MCF 10A (cell line): ENCODE measurements at regions of chr10 and their contacts with region 1.

Region 1: DNA sequence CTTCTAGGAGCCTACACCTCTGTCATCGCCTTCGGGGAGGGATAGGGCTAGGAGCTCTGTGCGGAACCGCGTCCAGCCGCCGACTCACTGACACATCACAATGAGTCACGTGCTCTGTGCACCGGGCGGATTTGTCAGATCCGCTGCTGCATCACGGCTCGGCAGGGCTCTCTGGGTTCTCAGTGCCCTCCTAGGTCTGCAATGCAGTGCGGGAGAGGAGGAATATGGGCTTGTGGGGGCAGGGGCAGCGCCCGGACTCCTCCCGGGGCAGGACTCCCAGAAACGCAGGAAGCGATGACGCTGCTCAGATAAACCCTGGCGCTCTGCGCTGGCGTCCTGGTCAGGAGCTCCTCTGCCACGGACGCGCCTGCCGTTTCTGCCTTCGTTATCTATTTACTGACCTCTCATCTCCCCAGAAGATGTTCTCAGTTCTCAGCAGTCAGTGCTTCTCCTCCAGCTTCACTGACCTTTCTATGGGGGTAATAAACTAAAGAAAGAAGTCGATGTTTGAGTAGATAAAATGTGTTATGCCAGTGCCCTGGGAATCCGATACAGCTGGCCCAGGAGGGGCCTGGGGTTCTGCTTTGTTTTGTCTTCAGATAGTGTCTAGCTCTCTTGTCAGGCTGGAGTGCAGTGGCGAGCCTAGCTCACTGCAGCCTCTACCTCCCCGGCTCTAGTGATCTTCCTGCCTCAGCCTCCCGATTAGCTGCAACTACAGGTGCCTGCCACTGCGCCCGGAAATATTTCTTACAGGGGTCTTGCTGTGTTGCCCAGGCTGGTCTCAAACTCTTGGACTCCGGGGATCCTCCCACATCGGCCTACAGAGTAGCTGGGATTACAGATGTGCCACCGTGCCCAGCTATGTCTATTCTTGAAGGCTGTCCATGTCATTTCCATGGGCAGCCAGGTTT is 22.8 kb upstream of the ITGB1 start:
- DNase-seq: peak; percentile 99
- H3K4me3 Mint-ChIP-seq: peak overlapping the region; percentile 92
- H3K27ac Mint-ChIP-seq: peak overlapping the region; percentile 99
- H3K4me1 Mint-ChIP-seq: peaks cover 34% of the 10 kb centered on the region
- H3K27me3 Mint-ChIP-seq: no peaks in the 10 kb centered on the region
- CTCF ChIP-seq: no peak

Region 2: GRCh38 chr10:32893431-32893830 is 87.4 kb before region 1 on chr10:
- CTCF ChIA-PET with region 1: no interaction called
- POLR2A ChIA-PET with region 1: no interaction called
- intact Hi-C with region 1: no loop called
- DNase-seq: peak; percentile 14
- H3K4me3 Mint-ChIP-seq: no peak overlapping the region
- H3K27ac Mint-ChIP-seq: no peak overlapping the region
- H3K4me1 Mint-ChIP-seq: peaks cover 5% of the 10 kb centered on the region
- H3K27me3 Mint-ChIP-seq: no peaks in the 10 kb centered on the region
- CTCF ChIP-seq: no peak

Region 3: GRCh38 chr10:32929632-32930031 is 51.2 kb before region 1 on chr10:
- CTCF ChIA-PET with region 1: no interaction called
- POLR2A ChIA-PET with region 1: interaction called, 89 read pairs
- intact Hi-C with region 1: no loop called
- DNase-seq: no peak
- H3K4me3 Mint-ChIP-seq: no peak overlapping the region
- H3K27ac Mint-ChIP-seq: peak overlapping the region; percentile 49
- H3K4me1 Mint-ChIP-seq: peaks cover 19% of the 10 kb centered on the region
- H3K27me3 Mint-ChIP-seq: no peaks in the 10 kb centered on the region
- CTCF ChIP-seq: no peak

Region 4: GRCh38 chr10:32938554-32939061 is 42.2 kb before region 1 on chr10:
- CTCF ChIA-PET with region 1: interaction called, 4 read pairs
- POLR2A ChIA-PET with region 1: interaction called, 89 read pairs
- intact Hi-C with region 1: no loop called
- DNase-seq: no peak
- H3K4me3 Mint-ChIP-seq: peak overlapping the region; percentile 63
- H3K27ac Mint-ChIP-seq: peak overlapping the region; percentile 97
- H3K4me1 Mint-ChIP-seq: peaks cover 59% of the 10 kb centered on the region
- H3K27me3 Mint-ChIP-seq: no peaks in the 10 kb centered on the region
- CTCF ChIP-seq: no peak

Region 5: GRCh38 chr10:32948451-32948850 is 32.4 kb before region 1 on chr10:
- CTCF ChIA-PET with region 1: interaction called, 4 read pairs
- POLR2A ChIA-PET with region 1: interaction called, 261 read pairs
- intact Hi-C with region 1: no loop called
- DNase-seq: no peak
- H3K4me3 Mint-ChIP-seq: no peak overlapping the region
- H3K27ac Mint-ChIP-seq: peak overlapping the region; percentile 51
- H3K4me1 Mint-ChIP-seq: peaks cover 59% of the 10 kb centered on the region
- H3K27me3 Mint-ChIP-seq: no peaks in the 10 kb centered on the region
- CTCF ChIP-seq: no peak

Region 6: DNA sequence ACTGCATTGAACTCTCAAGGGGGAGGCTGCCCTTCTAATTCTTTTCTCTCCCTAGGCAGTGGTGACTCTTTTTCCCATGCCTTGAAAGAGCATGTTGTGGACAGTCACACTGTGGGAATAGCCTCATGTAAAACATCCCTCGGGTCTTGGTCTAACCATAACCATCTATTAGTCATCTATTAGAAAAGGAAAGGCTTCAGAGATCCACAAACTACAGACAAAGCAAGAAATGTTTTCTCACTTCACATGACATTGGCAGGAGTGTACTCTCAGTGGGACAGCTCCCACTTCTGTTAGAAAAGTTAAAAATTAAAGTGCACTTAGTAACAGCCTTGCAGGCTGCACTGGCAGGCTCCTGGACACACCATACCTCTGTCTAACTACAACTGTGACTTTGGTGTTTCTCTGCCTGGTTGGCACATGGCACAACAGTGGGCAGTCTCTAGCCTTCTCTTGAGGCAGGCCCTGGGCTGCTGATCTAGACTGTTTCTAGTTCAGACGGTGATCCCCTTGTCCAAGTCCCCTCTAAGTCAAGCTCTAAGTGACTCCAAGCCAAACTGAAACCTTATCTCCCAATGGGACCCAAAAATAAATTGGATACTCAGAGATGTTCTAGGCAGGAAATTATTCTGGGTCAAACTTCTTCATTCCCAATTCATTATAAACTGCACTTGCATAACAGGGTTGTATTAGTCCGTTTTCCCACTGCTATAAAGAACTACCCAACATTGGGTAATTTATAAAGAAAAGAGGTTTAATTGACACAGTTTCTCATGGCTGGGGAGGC is 35.1 kb after region 1 on chr10:
- CTCF ChIA-PET with region 1: no interaction called
- POLR2A ChIA-PET with region 1: no interaction called
- intact Hi-C with region 1: no loop called
- DNase-seq: no peak
- H3K4me3 Mint-ChIP-seq: no peak overlapping the region
- H3K27ac Mint-ChIP-seq: no peak overlapping the region
- H3K4me1 Mint-ChIP-seq: no peaks in the 10 kb centered on the region
- H3K27me3 Mint-ChIP-seq: no peaks in the 10 kb centered on the region
- CTCF ChIP-seq: no peak

Region 7: DNA sequence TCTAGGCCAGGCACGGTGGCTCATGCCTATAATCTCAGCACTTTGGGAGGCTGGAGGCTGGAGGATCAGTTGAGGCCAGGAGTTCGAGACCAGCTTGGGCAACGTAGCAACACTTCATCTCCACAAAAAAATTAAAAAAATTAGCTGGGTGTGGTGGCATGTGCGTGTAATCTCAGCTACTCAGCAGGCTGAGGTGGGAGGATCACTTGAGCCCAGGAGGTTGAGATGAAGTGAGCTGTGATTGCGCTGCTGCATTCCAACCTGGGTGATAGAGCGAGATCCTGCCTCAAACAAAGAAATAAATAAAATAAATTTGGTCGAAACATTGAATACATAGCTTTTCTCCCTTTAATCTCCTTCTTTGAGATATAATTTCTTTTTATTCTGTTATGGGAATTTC is 57.9 kb after region 1 on chr10:
- CTCF ChIA-PET with region 1: no interaction called
- POLR2A ChIA-PET with region 1: no interaction called
- intact Hi-C with region 1: no loop called
- DNase-seq: no peak
- H3K4me3 Mint-ChIP-seq: no peak overlapping the region
- H3K27ac Mint-ChIP-seq: no peak overlapping the region
- H3K4me1 Mint-ChIP-seq: no peaks in the 10 kb centered on the region
- H3K27me3 Mint-ChIP-seq: no peaks in the 10 kb centered on the region
- CTCF ChIP-seq: no peak

Region 8: DNA sequence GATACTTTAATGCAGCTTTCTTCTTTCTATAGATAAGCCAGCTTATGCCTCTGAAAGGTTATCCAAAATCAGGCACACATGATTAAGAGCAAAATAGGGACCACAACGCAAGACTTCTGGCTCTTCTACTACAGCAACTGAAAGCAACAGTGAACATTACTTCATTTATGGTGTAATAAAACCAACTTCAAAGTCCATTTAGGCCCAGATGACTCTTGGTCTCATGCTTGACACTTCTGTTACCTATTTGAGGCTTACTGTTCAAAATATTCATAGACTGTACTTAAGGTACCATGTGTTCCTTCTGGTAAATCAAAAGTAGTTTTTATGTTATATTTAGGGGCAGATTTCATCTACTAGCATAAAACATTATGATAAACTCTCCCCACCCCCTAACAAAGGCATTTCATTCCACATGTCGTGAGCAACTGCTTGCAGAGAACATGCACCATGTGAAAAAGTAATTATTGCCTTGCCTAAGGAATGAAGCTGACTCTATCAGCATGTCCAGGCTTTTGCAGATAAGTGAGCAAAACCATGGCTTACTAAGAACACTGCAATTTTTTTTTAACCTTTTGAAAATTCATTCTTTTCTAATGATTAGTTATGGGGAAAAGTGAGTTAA is 132.1 kb after region 1 on chr10:
- CTCF ChIA-PET with region 1: no interaction called
- POLR2A ChIA-PET with region 1: no interaction called
- intact Hi-C with region 1: no loop called
- DNase-seq: no peak
- H3K4me3 Mint-ChIP-seq: no peak overlapping the region
- H3K27ac Mint-ChIP-seq: no peak overlapping the region
- H3K4me1 Mint-ChIP-seq: peaks cover 24% of the 10 kb centered on the region
- H3K27me3 Mint-ChIP-seq: no peaks in the 10 kb centered on the region
- CTCF ChIP-seq: no peak